Esophagus muscularis mucosa (tissue), 4 donors: ENCODE measurements at regions of chr10 and their contacts with region 1.

Region 1: GRCh38 chr10:102738692-102739121 is 5.0 kb upstream of the WBP1L start:
- DNase-seq: no peak
- H3K4me3 ChIP-seq: no peak overlapping the region
- H3K27ac ChIP-seq: no peak overlapping the region
- H3K4me1 ChIP-seq: peaks cover 5 to 19% (median 6%) of the 10 kb centered on the region in 4 donors
- H3K27me3 ChIP-seq: no peaks in the 10 kb centered on the region
- CTCF ChIP-seq: no peak
- EP300 ChIP-seq: no peak
- POLR2A ChIP-seq: no peak

Region 2: DNA sequence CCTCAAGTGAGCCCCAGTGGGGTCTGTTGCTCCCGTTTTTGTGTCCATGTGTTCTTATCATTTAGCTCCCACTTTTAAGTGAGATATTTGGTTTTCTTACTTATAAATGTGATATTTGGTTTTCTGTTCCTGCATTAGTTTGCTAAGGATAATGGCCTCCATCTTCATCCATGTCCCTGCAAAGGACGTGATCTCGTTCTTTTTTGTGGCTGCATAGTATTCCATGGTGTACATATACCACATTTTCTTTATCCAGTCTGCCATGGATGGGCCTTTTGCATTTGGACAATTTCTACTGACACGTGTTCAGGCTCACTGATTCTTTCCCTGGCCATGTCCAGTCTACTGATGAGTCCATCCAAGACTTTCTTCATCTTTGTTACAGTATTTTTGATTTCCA is 14.7 kb before region 1 on chr10:
- intact Hi-C with region 1: loop called (anchors 1 kb)
- DNase-seq: no peak
- H3K4me3 ChIP-seq: no peak overlapping the region
- H3K27ac ChIP-seq: no peak overlapping the region
- H3K4me1 ChIP-seq: peaks cover 2 to 8% (median 3%) of the 10 kb centered on the region in 4 donors
- H3K27me3 ChIP-seq: no peaks in the 10 kb centered on the region
- CTCF ChIP-seq: no peak
- EP300 ChIP-seq: no peak
- POLR2A ChIP-seq: no peak

Region 3: DNA sequence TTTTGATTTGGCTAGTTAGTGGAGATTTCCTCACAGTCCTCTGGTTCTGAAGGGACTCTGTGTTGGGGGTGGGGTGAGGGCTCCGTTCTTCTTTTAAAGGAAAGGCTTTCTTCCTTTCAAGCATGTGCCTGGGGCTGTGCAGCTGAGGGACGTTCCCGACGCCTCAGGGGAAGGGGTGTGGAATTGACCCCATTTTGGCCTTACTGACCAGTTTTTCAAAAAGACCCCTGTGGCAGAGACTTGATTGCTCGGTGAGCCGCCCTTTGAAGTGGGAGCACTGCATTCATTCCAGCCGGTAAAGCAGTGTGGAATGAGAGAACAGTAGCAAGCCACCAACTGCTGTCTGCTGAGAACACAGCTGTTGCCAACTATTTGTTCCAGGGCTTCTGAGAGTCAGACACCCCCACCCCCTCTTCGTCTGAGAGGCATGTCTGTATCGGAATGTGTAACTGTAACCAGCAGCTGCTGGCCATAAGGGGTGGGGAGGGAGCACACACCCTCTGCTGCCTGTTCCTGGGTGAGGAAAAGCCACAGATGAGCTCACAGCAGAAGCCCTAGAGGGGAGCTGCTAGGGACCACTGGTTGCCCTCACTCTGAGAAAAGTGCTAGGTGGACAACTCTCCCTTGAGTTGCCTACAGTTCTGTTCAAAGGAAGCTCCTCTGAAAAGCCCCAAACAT is 38.2 kb after region 1 on chr10:
- intact Hi-C with region 1: no loop called
- DNase-seq: peak; percentile 97
- H3K4me3 ChIP-seq: peak overlapping the region; percentile 42 to 56 (median 52)
- H3K27ac ChIP-seq: peak overlapping the region; percentile 89 to 94 (median 92)
- H3K4me1 ChIP-seq: peaks cover 90 to 100% (median 100%) of the 10 kb centered on the region in 4 donors
- H3K27me3 ChIP-seq: no peaks in the 10 kb centered on the region
- CTCF ChIP-seq: no peak
- EP300 ChIP-seq: peak; percentile 84
- POLR2A ChIP-seq: peak; percentile 59

Region 4: DNA sequence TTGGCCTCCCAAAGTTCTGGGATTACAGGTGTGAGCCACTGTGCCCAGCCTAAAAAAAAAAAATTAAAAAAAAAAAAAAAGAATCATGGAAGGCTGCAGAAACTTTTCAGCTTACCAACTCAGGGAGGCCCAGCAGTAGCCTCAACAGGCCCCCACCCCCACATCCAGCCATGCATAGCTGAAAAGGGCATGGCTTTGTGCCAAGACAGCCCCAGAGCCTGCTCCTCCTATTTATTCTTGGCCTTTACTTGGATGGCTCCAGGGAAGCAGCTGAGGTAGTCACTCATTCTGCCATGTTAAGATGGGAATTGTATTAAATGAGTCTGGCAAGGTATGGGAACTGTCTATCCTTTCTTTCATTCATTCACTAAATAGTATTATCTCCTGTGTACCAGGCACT is 165.6 kb after region 1 on chr10:
- intact Hi-C with region 1: no loop called
- DNase-seq: no peak
- H3K4me3 ChIP-seq: no peak overlapping the region
- H3K27ac ChIP-seq: no peak overlapping the region
- H3K4me1 ChIP-seq: no peaks in the 10 kb centered on the region
- H3K27me3 ChIP-seq: no peaks in the 10 kb centered on the region
- CTCF ChIP-seq: no peak
- EP300 ChIP-seq: no peak
- POLR2A ChIP-seq: no peak

Region 5: GRCh38 chr10:103727546-103727963 is 988.8 kb after region 1 on chr10:
- intact Hi-C with region 1: no loop called
- DNase-seq: no peak
- H3K4me3 ChIP-seq: no peak overlapping the region
- H3K27ac ChIP-seq: peak overlapping the region in 2 of 4 donors; percentile 2 to 4
- H3K4me1 ChIP-seq: peaks cover 10 to 23% (median 16%) of the 10 kb centered on the region in 4 donors
- H3K27me3 ChIP-seq: no peaks in the 10 kb centered on the region
- CTCF ChIP-seq: no peak
- EP300 ChIP-seq: no peak
- POLR2A ChIP-seq: no peak